OCI-LY7 (cell line): ENCODE measurements at regions of chr10 and their contacts with region 1.

Region 1: DNA sequence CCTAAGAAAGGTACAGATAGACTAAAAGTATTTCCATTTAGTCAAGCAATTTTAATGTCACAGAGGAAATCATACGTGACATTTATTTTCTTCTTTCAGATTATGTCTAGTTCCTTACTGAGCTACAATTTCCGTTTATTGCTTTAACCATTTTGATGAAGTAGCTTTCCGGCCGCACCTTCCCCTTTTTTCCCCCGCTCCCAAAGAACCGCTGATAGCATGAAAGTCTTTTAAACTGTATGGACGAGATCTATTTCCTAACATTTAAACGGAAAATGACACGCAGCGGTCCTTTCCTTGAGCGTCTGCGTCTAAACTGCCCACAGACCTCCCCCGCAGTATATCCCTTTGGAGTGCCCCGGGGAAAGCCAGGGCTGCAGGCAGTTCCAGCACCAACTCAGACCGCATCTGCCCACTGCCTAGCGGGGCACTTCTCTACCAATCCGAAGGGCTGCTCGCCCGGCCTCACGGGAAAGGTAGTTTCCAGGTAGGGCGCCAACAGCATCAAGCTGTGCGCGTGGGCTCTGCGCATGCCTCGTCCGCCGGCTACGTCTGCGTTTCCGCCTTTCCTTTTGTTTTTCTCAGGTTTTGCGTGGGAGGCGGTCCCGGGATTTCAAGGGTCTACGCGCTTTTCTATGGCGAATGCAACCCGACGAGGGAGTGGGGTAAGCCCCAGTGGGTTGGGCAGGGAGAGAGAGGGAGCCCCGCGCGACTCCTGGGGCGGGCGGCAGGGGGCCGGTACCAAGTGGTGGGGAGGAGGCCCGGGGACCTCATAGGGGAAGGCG is at the start of gene ZNF33A:
- DNase-seq: peak; percentile 96
- H3K4me3 ChIP-seq: peak within 1 kb of the TSS; percentile 75
- H3K27ac ChIP-seq: peak within 1 kb of the TSS; percentile 83
- H3K4me1 ChIP-seq: peaks cover 17% of the 10 kb centered on the region
- CTCF ChIP-seq: no peak
- total RNA-seq, gene ZNF33A: 31.2 and 39.8 TPM in 2 replicates

Region 2: GRCh38 chr10:37654456-37654855 is 355.9 kb before region 1 on chr10:
- CTCF ChIA-PET with region 1: no interaction called
- POLR2A ChIA-PET with region 1: no interaction called
- intact Hi-C with region 1: no loop called
- DNase-seq: no peak
- H3K4me3 ChIP-seq: no peak overlapping the region
- H3K27ac ChIP-seq: no peak overlapping the region
- H3K4me1 ChIP-seq: no peaks in the 10 kb centered on the region
- CTCF ChIP-seq: no peak

Region 3: DNA sequence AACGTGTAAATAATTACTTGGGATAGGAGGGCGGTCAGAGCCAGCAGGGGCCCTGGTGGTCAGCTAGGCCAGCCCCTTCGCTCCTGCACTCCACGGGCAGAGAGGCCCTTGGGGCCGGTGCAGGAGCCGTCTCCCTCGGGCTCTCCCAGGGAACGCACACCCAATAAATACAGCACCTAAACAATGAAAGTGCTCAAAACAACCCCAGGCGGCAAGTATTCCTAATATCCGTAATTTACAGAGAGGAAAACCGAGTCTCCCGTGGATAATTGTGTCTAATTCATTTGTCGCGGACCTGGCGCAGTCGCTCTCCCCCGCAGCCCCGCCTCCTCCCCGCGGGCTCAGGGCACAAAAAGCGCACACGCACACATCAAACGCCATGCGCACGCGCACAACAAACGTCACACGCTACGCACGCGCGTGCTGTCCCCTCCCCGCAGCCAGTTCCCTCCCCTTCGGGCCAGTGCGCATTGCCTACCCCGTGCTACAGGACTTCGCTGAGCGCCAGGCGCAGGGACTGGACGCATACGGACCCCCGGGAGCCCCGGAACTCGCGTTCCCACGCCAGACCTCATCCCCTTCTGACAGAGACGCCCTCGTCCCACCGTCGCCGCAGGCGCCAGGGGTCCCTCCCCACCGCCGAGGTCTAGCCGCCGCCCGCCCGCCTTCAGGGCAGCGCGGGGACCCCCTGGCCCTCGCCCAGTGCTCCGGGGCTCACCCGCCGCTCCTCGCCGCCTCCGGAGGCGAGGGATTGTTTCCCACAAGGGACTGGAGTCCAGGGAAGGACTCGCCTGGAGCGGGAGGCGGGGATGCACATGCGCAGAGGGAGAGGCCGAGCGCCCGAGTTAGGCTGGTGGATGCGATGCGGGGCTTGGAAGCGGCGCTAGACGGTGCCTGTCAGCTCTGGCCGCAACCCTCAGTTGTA is 152.8 kb before region 1 on chr10 and contains the start of gene ZNF248:
- CTCF ChIA-PET with region 1: no interaction called
- POLR2A ChIA-PET with region 1: no interaction called
- intact Hi-C with region 1: loop called (anchors 2 kb)
- DNase-seq: peak; percentile 97
- H3K4me3 ChIP-seq: peak within 1 kb of the TSS; percentile 84
- H3K27ac ChIP-seq: peak within 1 kb of the TSS; percentile 24
- H3K4me1 ChIP-seq: peaks cover 34% of the 10 kb centered on the region
- CTCF ChIP-seq: no peak
- total RNA-seq, gene ZNF248: 13.4 and 16.8 TPM in 2 replicates

Region 4: GRCh38 chr10:37976091-37976879 is 34.0 kb before region 1 on chr10 and contains the start of gene ZNF25:
- CTCF ChIA-PET with region 1: interaction called, 5 read pairs
- POLR2A ChIA-PET with region 1: interaction called, 7 read pairs
- intact Hi-C with region 1: loop called (anchors 1 kb)
- DNase-seq: peak; percentile 99
- H3K4me3 ChIP-seq: peak within 1 kb of the TSS; percentile 82
- H3K27ac ChIP-seq: peak within 1 kb of the TSS; percentile 78
- H3K4me1 ChIP-seq: peaks cover 17% of the 10 kb centered on the region
- CTCF ChIP-seq: peak; percentile 91
- total RNA-seq, gene ZNF25: 2.2 and 2.4 TPM in 2 replicates

Region 5: GRCh38 chr10:38025283-38025682 is 15.0 kb after region 1 on chr10:
- CTCF ChIA-PET with region 1: no interaction called
- POLR2A ChIA-PET with region 1: no interaction called
- intact Hi-C with region 1: loop called (anchors 2 kb)
- DNase-seq: peak; percentile 71
- H3K4me3 ChIP-seq: no peak overlapping the region
- H3K27ac ChIP-seq: peak overlapping the region; percentile 40
- H3K4me1 ChIP-seq: peaks cover 18% of the 10 kb centered on the region
- CTCF ChIP-seq: no peak

Region 6: DNA sequence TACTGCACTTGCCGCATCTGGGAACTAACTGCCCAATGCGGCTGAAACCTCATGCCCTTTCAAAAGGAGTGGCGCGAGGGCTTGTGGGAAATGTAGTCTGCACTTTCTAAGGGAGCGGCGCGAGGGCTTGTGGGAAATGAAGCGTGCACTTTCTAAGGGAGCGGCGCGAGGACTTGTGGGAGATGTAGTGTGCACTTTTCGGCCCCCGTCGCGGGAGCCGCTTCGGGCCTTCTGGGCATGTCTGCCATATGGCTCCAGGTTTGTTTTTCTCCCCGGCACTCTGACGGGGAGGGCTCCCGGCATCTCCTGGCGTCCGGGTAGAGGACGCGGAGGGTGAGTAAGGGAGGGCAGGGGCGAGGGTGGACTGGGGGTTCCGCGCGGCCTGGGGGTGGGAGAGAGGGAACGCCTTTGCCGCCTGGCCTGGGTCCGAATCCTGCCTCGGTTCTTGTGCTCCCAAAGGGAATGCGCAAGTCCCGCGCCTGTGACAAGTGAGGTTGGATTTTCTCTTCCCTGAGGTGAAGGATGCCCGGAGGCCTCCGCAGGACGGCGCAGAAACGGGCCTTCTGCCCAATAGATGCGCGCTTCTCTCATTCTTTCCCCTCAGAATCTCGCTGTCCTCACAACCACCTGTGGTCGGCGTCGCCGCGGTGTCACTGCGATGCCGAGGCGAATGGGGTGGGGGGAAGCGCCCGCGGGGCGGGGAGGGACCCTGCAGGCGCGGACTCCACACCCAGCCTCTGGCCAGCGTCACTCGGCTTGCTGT is 84.0 kb after region 1 on chr10 and contains the start of gene ZNF37A:
- CTCF ChIA-PET with region 1: no interaction called
- POLR2A ChIA-PET with region 1: interaction called, 4 read pairs
- intact Hi-C with region 1: loop called (anchors 1 kb)
- DNase-seq: peak; percentile 96
- H3K4me3 ChIP-seq: peak within 1 kb of the TSS; percentile 81
- H3K27ac ChIP-seq: peak within 1 kb of the TSS; percentile 28
- H3K4me1 ChIP-seq: peaks cover 12% of the 10 kb centered on the region
- CTCF ChIP-seq: no peak
- total RNA-seq, gene ZNF37A: 21.2 and 21.6 TPM in 2 replicates